ENCODE measurements at regions of chr11 and their contacts with region 1.

Region 1: GRCh38 chr11:78645226-78646202 is 70.8 kb upstream of the NARS2 start:
- DNase-seq: peak; percentile 72
- H3K4me3 Mint-ChIP-seq: no peak overlapping the region
- H3K27ac Mint-ChIP-seq: no peak overlapping the region
- H3K4me1 Mint-ChIP-seq: peaks cover 45% of the 10 kb centered on the region
- H3K27me3 Mint-ChIP-seq: peaks cover 1% of the 10 kb centered on the region

Region 2: GRCh38 chr11:78188286-78189173 is 457.0 kb before region 1 on chr11 and contains the starts of genes KCTD21 and USP35:
- CTCF ChIA-PET with region 1: no interaction called
- POLR2A ChIA-PET with region 1: no interaction called
- intact Hi-C with region 1: loop called (anchors 1 kb)
- DNase-seq: peak; percentile 95
- H3K4me3 Mint-ChIP-seq: peak within 1 kb of the TSS; percentile 98
- H3K27ac Mint-ChIP-seq: peak within 1 kb of the TSS; percentile 98
- H3K4me1 Mint-ChIP-seq: peaks cover 57% of the 10 kb centered on the region
- H3K27me3 Mint-ChIP-seq: no peaks in the 10 kb centered on the region
- total RNA-seq, gene KCTD21: 7.9 to 8.8 TPM
- total RNA-seq, gene USP35: 9.3 to 9.6 TPM

Region 3: DNA sequence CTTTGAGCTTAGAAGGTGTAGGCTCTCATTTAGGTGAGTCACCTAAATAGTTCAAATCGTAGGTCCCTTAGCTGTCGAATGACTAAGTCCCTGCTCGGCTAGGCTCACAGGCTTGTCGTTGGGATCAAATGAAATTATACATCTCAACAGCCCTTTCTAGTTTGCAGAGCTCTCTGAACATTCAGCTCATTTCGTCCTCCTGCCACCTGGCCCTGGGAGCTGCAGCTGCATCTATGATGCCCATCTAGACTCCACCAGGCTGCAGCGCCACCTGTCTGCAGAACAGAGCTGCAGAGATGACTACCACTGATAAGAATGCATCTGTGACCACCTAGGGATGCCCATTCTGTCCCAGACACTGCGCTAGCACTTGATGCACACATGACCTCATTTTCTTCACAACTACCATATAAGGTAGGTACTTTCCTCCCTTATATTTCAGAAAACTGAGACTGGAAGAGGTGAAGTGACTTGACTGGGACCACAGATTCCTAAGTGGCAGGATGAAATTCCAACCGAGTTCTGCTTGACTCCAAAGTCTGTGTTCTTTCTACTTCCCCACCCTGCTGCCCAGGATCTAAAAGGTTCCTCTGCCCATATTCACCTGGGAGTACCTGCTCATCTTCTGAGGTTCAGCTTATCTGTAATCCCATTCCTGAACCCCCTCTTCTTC is 70.3 kb after region 1 on chr11:
- CTCF ChIA-PET with region 1: interaction called, 167 read pairs
- POLR2A ChIA-PET with region 1: no interaction called
- intact Hi-C with region 1: loop called (anchors 1 kb)
- DNase-seq: peak; percentile 72
- H3K4me3 Mint-ChIP-seq: no peak overlapping the region
- H3K27ac Mint-ChIP-seq: no peak overlapping the region
- H3K4me1 Mint-ChIP-seq: no peaks in the 10 kb centered on the region
- H3K27me3 Mint-ChIP-seq: no peaks in the 10 kb centered on the region

Region 4: GRCh38 chr11:78798660-78799059 is 153.1 kb after region 1 on chr11:
- CTCF ChIA-PET with region 1: interaction called, 21 read pairs
- POLR2A ChIA-PET with region 1: no interaction called
- intact Hi-C with region 1: no loop called
- DNase-seq: peak; percentile 54
- H3K4me3 Mint-ChIP-seq: no peak overlapping the region
- H3K27ac Mint-ChIP-seq: no peak overlapping the region
- H3K4me1 Mint-ChIP-seq: no peaks in the 10 kb centered on the region
- H3K27me3 Mint-ChIP-seq: no peaks in the 10 kb centered on the region

Region 5: DNA sequence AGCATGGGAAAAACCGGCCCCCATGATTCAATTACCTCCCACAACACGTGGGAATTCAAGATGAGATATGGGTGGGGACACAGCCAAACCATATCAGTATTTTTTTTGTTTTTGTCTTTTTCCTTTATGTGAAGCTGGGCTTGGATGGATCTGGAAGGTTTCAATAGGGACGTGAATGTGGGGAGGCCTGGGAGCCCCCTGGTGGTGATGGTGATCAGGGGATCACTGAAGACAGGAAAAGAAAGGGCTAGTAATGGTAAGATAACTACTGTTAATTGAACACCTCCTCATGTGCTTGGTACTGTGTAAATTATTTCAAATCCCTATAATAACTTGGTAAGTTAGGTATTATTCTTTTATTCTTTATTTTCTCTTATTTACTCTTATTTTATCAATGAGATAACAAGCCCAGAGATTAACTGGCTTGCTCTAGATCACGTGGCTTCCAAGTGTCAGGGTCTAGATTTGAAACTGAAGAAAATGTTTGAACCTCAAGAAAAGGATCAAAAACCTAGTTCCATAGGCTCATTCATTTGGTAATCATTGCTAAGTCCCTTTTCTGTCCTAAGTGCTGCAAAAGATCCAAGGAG is 431.1 kb after region 1 on chr11:
- CTCF ChIA-PET with region 1: interaction called, 19 read pairs
- POLR2A ChIA-PET with region 1: no interaction called
- intact Hi-C with region 1: no loop called
- DNase-seq: peak; percentile 36
- H3K4me3 Mint-ChIP-seq: no peak overlapping the region
- H3K27ac Mint-ChIP-seq: no peak overlapping the region
- H3K4me1 Mint-ChIP-seq: no peaks in the 10 kb centered on the region
- H3K27me3 Mint-ChIP-seq: no peaks in the 10 kb centered on the region

Region 6: GRCh38 chr11:79493555-79494171 is 848.1 kb after region 1 on chr11:
- CTCF ChIA-PET with region 1: interaction called, 14 read pairs
- POLR2A ChIA-PET with region 1: no interaction called
- intact Hi-C with region 1: no loop called
- DNase-seq: peak; percentile 50
- H3K4me3 Mint-ChIP-seq: no peak overlapping the region
- H3K27ac Mint-ChIP-seq: no peak overlapping the region
- H3K4me1 Mint-ChIP-seq: no peaks in the 10 kb centered on the region
- H3K27me3 Mint-ChIP-seq: peaks cover 3% of the 10 kb centered on the region